ENCODE measurements at regions of chr11 and their contacts with region 1.

Region 1: DNA sequence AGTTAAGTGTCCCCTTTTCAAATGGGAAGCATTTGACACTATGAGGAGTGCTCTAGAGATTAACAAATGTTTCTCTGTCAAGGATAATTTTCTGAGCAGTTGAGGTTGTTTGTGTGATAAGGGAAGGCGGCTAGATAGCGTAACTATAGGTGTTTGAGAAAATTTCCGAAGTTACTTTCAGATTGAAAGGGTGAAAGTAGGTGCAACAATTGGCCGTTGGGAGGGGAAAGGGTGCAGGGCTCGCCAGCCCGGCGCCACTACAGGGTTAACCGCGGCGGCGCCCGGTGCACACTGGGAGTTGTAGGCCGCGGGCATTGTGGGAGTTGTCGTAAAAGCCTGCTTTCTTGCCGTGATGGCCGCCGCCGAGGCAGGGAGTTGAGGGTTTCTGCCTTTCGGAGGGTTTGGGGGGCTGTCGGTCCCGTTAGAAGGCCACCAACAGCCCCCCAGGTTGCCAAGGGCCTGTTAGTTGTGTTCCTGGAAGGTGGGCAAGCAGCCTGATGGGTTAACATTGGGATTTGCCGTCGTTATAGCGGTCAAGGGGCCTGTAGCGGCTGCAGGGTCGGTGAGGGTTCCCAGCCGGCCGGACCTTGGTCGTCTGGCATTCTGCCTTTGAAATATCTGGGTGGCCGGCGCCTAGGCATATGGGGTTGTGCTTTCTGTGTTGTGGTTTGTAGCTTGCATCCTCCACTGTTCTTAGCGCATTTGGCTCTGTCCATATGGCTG is 36.5 kb upstream of the HSD17B12 start:
- DNase-seq: peak; percentile 66 to 89 (median 82)
- ATAC-seq: peak; percentile 98 to 100 (median 100)
- H3K4me3 ChIP-seq: peak overlapping the region; percentile 95
- H3K4me3 Mint-ChIP-seq: peak overlapping the region; percentile 93
- H3K27ac ChIP-seq: peak overlapping the region; percentile 74
- H3K27ac Mint-ChIP-seq: peak overlapping the region; percentile 61 to 94
- H3K4me1 ChIP-seq: peaks cover 7 to 11% of the 10 kb centered on the region in 2 experiments
- H3K4me1 Mint-ChIP-seq: peaks cover 20 to 25% (median 23%) of the 10 kb centered on the region in 3 donors
- H3K27me3 ChIP-seq: peaks cover 2 to 5% of the 10 kb centered on the region in 2 experiments
- H3K27me3 Mint-ChIP-seq: peaks cover 11 to 16% of the 10 kb centered on the region in 2 donors

Region 2: GRCh38 chr11:43376594-43376993 is 267.5 kb before region 1 on chr11:
- CTCF ChIA-PET with region 1: no interaction called
- POLR2A ChIA-PET with region 1: interaction called in 1 of 2 experiments, 12 read pairs
- DNase-seq: no peak
- ATAC-seq: no peak
- H3K4me3 ChIP-seq: no peak overlapping the region
- H3K4me3 Mint-ChIP-seq: no peak overlapping the region
- H3K27ac ChIP-seq: no peak overlapping the region
- H3K27ac Mint-ChIP-seq: no peak overlapping the region
- H3K4me1 ChIP-seq: no peaks in the 10 kb centered on the region
- H3K4me1 Mint-ChIP-seq: peaks cover 18 to 31% (median 30%) of the 10 kb centered on the region in 3 donors
- H3K27me3 ChIP-seq: no peaks in the 10 kb centered on the region
- H3K27me3 Mint-ChIP-seq: no peaks in the 10 kb centered on the region

Region 3: GRCh38 chr11:43632171-43632570 is 11.9 kb before region 1 on chr11:
- CTCF ChIA-PET with region 1: no interaction called
- POLR2A ChIA-PET with region 1: no interaction called
- DNase-seq: no peak
- ATAC-seq: no peak
- H3K4me3 ChIP-seq: no peak overlapping the region
- H3K4me3 Mint-ChIP-seq: no peak overlapping the region
- H3K27ac ChIP-seq: no peak overlapping the region
- H3K27ac Mint-ChIP-seq: no peak overlapping the region
- H3K4me1 ChIP-seq: no peaks in the 10 kb centered on the region
- H3K4me1 Mint-ChIP-seq: no peaks in the 10 kb centered on the region
- H3K27me3 ChIP-seq: peaks cover 12 to 18% of the 10 kb centered on the region in 2 experiments
- H3K27me3 Mint-ChIP-seq: peaks cover 57 to 64% of the 10 kb centered on the region in 2 donors